ENCODE measurements at regions of chr12 and their contacts with region 1.

Region 1: GRCh38 chr12:25052196-25052913 is 103.5 kb upstream of the BCAT1 start:
- DNase-seq: peak; percentile 62
- H3K4me3 Mint-ChIP-seq: peak overlapping the region; percentile 89
- H3K27ac Mint-ChIP-seq: peak overlapping the region; percentile 99
- H3K4me1 Mint-ChIP-seq: peaks cover 32% of the 10 kb centered on the region
- H3K27me3 Mint-ChIP-seq: no peaks in the 10 kb centered on the region

Region 2: GRCh38 chr12:24661657-24662098 is 390.7 kb before region 1 on chr12:
- CTCF ChIA-PET with region 1: no interaction called
- intact Hi-C with region 1: no loop called
- DNase-seq: no peak
- H3K4me3 Mint-ChIP-seq: no peak overlapping the region
- H3K27ac Mint-ChIP-seq: no peak overlapping the region
- H3K4me1 Mint-ChIP-seq: no peaks in the 10 kb centered on the region
- H3K27me3 Mint-ChIP-seq: peaks cover 4% of the 10 kb centered on the region

Region 3: GRCh38 chr12:24919346-24920001 is 132.9 kb before region 1 on chr12:
- CTCF ChIA-PET with region 1: no interaction called
- intact Hi-C with region 1: loop called (anchors 1 kb)
- DNase-seq: peak; percentile 78
- H3K4me3 Mint-ChIP-seq: no peak overlapping the region
- H3K27ac Mint-ChIP-seq: no peak overlapping the region
- H3K4me1 Mint-ChIP-seq: peaks cover 42% of the 10 kb centered on the region
- H3K27me3 Mint-ChIP-seq: peaks cover 13% of the 10 kb centered on the region

Region 4: GRCh38 chr12:24931666-24932405 is 120.5 kb before region 1 on chr12:
- CTCF ChIA-PET with region 1: no interaction called
- intact Hi-C with region 1: no loop called
- DNase-seq: no peak
- H3K4me3 Mint-ChIP-seq: no peak overlapping the region
- H3K27ac Mint-ChIP-seq: no peak overlapping the region
- H3K4me1 Mint-ChIP-seq: peaks cover 9% of the 10 kb centered on the region
- H3K27me3 Mint-ChIP-seq: peaks cover 40% of the 10 kb centered on the region

Region 5: DNA sequence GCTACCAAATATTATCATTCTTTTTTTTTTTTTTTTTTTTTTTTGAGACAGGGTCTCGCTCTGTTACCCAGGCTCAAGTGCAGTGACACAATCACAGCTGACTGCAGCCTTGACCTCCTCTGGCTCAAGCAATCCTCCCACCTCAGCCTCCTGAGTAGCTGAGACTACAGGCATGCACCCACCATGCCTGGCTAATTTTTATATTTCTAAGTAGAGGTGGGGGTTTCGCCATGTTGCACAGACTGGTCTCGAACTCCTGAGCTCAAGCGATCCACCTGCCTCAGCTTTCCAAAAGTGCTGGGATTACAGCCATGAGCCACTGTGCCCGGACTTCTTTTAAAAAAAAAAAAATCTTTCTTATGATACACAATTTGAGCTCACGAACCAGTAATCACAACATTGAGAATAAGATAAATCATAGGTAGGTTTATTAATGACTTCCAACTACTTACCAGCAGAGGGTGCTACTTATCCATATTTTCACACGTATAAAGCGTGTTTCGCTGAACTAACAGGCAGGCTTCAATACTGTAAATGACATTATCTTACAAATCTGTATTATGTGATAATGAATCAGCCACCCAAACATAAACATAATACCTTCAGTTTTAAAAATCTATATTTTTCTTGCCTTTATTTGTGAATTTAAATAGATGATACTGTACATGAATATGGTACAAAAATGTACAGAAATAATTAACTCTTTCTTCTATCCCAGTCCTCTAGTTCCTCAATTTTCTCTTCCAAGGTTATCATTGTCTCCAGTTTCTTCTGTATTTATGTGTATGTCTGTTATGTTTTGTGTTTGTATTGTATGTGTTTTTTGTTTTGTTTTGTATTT is 60.9 kb before region 1 on chr12:
- CTCF ChIA-PET with region 1: interaction called, 11 read pairs
- intact Hi-C with region 1: no loop called
- DNase-seq: no peak
- H3K4me3 Mint-ChIP-seq: no peak overlapping the region
- H3K27ac Mint-ChIP-seq: no peak overlapping the region
- H3K4me1 Mint-ChIP-seq: peaks cover 9% of the 10 kb centered on the region
- H3K27me3 Mint-ChIP-seq: peaks cover 2% of the 10 kb centered on the region

Region 6: GRCh38 chr12:25072906-25073650 is 20.7 kb after region 1 on chr12:
- CTCF ChIA-PET with region 1: no interaction called
- intact Hi-C with region 1: no loop called
- DNase-seq: no peak
- H3K4me3 Mint-ChIP-seq: no peak overlapping the region
- H3K27ac Mint-ChIP-seq: no peak overlapping the region
- H3K4me1 Mint-ChIP-seq: peaks cover 24% of the 10 kb centered on the region
- H3K27me3 Mint-ChIP-seq: no peaks in the 10 kb centered on the region

Region 7: GRCh38 chr12:25089738-25090137 is 37.4 kb after region 1 on chr12:
- CTCF ChIA-PET with region 1: interaction called, 5 read pairs
- intact Hi-C with region 1: loop called (anchors 1 kb)
- DNase-seq: peak; percentile 50
- H3K4me3 Mint-ChIP-seq: no peak overlapping the region
- H3K27ac Mint-ChIP-seq: no peak overlapping the region
- H3K4me1 Mint-ChIP-seq: peaks cover 29% of the 10 kb centered on the region
- H3K27me3 Mint-ChIP-seq: no peaks in the 10 kb centered on the region

Region 8: DNA sequence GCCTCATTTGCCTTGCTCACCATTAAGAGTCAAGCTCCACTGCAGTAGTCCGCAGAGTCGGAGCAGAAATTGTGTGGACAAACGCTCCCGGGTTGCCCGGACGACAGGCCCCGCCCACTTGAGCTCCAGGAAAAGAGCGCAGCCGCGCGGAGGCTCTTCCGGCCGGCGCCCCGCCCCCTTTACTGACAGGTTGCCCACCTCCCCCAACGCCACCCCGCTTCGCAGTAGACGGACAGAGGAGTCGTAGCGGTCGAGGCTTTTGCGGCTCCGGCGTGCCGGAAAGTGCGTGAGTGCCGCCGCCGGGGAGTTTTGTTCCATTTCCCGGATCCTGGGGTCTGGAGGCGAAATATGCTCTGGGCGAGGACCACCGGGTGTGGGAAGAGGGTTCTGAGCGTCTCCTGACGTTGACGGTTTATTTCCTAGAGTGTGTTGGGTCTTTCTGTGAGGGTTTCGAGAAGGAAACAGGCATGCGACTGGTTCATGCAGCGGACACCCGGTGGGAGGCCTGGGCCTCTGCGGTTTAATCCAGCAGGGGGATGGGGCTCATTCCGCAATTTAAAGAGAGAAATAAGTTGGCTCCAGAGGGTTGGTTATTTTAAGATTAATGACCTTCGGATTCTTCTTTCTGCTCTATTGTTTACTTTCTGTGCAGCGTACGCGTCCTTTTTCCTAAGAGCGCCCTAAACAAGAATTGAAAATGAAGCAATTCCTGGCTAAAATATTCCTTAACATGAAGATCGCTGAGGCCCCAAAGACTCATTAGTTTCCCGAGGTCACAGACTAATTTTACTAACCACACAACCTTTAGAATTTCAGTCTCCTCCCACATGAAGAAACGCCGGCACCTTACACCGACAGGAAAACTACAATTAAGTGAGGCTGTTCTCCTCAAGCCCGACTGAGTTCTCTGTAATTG is 143.0 kb after region 1 on chr12 and contains the starts of genes DNAI7 and ETFRF1:
- CTCF ChIA-PET with region 1: no interaction called
- intact Hi-C with region 1: loop called (anchors 1 kb)
- DNase-seq: peak; percentile 94
- H3K4me3 Mint-ChIP-seq: peak within 1 kb of the TSS; percentile 98
- H3K27ac Mint-ChIP-seq: peak within 1 kb of the TSS; percentile 94
- H3K4me1 Mint-ChIP-seq: peaks cover 22% of the 10 kb centered on the region
- H3K27me3 Mint-ChIP-seq: no peaks in the 10 kb centered on the region
- total RNA-seq, gene DNAI7: 0.10 to 0.35 TPM
- total RNA-seq, gene ETFRF1: 11.4 to 13.1 TPM

Region 9: GRCh38 chr12:25328072-25328712 is 275.8 kb after region 1 on chr12:
- CTCF ChIA-PET with region 1: no interaction called
- intact Hi-C with region 1: loop called (anchors 1 kb)
- DNase-seq: peak; percentile 20
- H3K4me3 Mint-ChIP-seq: no peak overlapping the region
- H3K27ac Mint-ChIP-seq: no peak overlapping the region
- H3K4me1 Mint-ChIP-seq: peaks cover 32% of the 10 kb centered on the region
- H3K27me3 Mint-ChIP-seq: no peaks in the 10 kb centered on the region

Region 10: GRCh38 chr12:25655689-25656088 is 603.3 kb after region 1 on chr12:
- CTCF ChIA-PET with region 1: no interaction called
- intact Hi-C with region 1: no loop called
- DNase-seq: no peak
- H3K4me3 Mint-ChIP-seq: no peak overlapping the region
- H3K27ac Mint-ChIP-seq: no peak overlapping the region
- H3K4me1 Mint-ChIP-seq: peaks cover 6% of the 10 kb centered on the region
- H3K27me3 Mint-ChIP-seq: peaks cover 2% of the 10 kb centered on the region

Region 11: GRCh38 chr12:25958428-25959070 is 906.2 kb after region 1 on chr12 and contains the start of gene RASSF8:
- CTCF ChIA-PET with region 1: no interaction called
- intact Hi-C with region 1: loop called (anchors 5 kb)
- DNase-seq: peak; percentile 23
- H3K4me3 Mint-ChIP-seq: peak within 1 kb of the TSS; percentile 78
- H3K27ac Mint-ChIP-seq: no peak within 1 kb of the TSS
- H3K4me1 Mint-ChIP-seq: peaks cover 11% of the 10 kb centered on the region
- H3K27me3 Mint-ChIP-seq: peaks cover 58% of the 10 kb centered on the region
- total RNA-seq, gene RASSF8: 0.32 to 0.81 TPM

Measured in activated naive CD4-positive, alpha-beta T cell treated with anti-CD3 and anti-CD28 coated beads for 36 hours (primary cell).